Psoas muscle (tissue), 8 donors: ENCODE measurements at regions of chr12 and their contacts with region 1.

Region 1: DNA sequence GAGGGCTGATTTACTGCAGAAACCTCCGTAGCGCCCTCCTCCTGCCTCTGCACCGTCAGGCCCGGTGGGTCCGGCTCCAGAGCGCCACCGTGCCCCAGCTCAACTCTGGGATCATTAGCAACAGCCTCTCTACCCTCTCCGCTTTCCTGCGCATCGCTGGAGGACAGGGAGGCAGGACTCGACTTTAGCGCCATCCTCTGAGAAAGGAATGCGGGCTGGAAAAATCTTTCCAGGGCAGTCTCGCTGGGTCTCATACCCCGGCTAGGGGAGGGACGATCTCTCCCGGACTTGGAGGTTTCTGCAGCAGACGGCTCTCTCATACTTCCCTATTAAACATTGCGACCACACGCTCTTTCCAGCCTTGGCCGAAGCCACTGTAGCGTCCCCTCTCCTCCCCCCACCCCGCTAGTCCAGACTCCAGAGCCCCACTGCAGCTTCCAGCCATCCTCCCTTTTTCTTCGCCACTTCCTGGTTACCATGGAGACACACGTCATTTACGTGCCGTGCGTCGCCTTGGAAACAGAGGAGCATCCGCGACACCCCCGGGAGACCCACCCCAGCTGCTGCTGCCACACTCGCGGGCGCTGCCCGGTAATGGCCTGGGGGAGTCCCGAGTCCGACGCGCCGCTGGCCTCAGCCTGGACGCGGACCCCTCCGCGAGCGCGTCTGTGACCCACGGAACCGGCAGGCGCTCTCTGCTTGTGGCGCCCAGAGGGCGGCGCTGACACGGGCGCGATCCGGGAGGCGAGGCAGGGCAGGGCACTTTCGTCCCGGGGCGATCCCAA is at the start of gene CCDC184:
- DNase-seq: peak; percentile 48 to 74
- ATAC-seq: peak; percentile 58 to 78 (median 66)
- H3K4me3 ChIP-seq: peak within 1 kb of the TSS; percentile 74
- H3K27ac ChIP-seq: no peak within 1 kb of the TSS
- H3K4me1 ChIP-seq: peaks cover 21% of the 10 kb centered on the region
- H3K27me3 ChIP-seq: peaks cover 0 to 57% (median 13%) of the 10 kb centered on the region in 3 donors
- CTCF ChIP-seq: peak; percentile 17
- total RNA-seq, gene CCDC184: 0.47 to 0.84 (median 0.63) TPM

Region 2: DNA sequence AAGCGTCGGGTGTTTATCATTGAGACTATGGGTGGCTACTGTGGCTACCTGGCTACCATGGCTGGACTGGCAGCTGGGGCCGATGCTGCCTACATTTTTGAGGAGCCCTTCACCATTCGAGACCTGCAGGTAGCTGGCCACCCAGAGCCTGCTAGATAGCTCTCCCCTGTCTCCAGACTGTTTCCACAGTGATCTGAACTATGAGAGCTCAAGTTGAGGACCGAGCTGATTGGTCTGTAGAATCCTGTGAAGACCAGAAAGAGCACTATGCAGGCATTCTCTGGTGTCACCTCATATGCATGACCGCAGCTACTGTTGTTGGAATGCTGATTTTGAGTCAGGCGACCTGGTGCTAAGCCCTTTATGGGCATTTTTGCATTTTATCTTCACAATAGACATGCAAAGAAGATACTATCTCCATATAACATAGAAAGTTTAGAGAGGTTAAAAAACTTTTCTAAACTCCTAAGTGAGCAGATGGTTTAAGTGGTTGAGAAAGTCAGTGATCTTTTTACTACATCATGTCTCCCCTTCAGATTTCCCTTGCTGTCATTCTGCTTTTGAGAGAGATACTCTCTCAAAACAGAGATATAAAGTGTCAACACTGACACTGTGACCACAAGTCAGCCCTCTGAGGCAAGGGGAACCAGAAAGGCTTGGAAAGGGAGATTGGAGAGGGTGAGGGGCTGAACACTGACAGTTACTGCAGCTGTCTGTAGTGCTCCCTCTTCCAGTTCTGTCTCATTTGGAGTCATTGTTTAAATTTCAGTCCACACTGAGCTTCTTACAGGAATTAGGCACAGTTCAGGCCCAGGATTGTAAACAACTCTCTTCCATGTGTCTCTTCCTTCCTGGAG is 40.2 kb before region 1 on chr12:
- intact Hi-C with region 1: no loop called
- DNase-seq: no peak
- ATAC-seq: peak in 1 of 4 donors; percentile 7
- H3K4me3 ChIP-seq: no peak overlapping the region
- H3K27ac ChIP-seq: peak overlapping the region; percentile 97
- H3K4me1 ChIP-seq: peaks cover 4% of the 10 kb centered on the region
- H3K27me3 ChIP-seq: no peaks in the 10 kb centered on the region
- CTCF ChIP-seq: no peak

Region 3: DNA sequence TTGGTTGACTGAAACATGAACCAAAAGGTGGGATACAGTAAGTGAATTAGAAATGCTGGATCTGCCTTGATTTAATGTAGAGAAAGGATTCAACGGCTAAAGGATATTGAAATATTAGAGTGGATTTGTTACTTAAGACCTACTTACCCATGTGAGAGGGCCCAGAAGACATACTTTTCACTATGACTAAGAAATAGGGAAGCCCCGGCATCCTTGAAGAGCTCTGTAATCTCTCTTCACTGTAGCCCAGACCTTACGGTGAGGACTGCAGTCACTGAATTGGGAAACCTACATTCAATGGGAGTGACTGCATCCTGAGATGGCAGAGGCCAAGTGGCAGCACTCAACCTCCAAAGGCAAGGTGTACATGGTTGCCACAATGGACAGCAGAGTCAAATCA is 446.3 kb after region 1 on chr12:
- intact Hi-C with region 1: loop called (anchors 10 kb)
- DNase-seq: no peak
- ATAC-seq: no peak
- H3K4me3 ChIP-seq: no peak overlapping the region
- H3K27ac ChIP-seq: no peak overlapping the region
- H3K4me1 ChIP-seq: no peaks in the 10 kb centered on the region
- H3K27me3 ChIP-seq: peaks cover 0 to 10% (median 0%) of the 10 kb centered on the region in 3 donors
- CTCF ChIP-seq: no peak